ENCODE measurements at regions of chr5 and their contacts with region 1.

Region 1: DNA sequence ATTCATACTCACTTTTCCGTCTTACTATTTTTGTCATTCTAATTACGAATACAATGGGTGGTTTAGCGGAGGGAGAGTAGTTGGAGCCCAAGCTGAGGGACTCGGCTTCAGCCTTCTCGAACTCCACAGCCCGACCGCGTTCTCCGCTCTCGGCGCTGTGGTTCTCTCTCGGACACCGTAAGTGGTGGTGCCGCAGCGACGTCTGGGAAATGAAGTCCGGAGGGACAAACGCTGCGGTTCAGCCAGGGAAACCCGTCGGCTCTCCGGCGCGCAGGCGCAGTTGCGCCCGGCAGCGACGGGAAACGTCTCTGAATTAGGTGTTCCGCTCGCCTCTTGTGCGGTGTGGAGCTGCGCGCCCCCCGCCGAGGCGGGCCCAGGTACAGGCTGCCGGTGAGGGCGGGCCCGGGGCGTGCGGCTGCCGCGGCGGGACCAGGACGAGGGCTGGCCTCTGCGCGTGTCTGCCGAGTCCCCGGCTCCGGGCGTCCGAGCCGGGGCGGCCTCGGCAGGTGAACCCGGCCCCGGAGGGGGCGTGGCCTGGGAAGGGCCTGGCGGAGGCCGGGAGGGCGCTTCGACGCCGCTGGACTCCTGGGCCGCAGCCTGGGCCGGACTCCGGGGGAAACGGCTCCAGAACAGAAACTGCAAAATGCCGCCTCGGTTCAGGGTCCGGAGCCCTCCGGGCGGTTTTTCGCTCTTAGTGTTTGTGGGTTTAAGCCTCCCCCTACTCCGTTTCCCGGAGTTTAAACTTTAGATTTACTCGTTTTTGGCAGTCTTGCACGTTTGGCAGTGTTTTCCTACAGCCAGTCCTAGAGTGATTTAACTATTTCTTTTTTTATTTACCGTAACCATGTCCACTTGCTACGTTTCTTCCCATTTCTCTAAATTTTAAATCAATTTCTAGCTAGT is at the start of gene ZNF879:
- DNase-seq: peak; percentile 96
- ATAC-seq: peak; percentile 97
- H3K4me3 Mint-ChIP-seq: peak within 1 kb of the TSS; percentile 77
- H3K27ac Mint-ChIP-seq: peak within 1 kb of the TSS; percentile 89
- H3K4me1 Mint-ChIP-seq: peaks cover 11% of the 10 kb centered on the region
- H3K27me3 Mint-ChIP-seq: no peaks in the 10 kb centered on the region
- total RNA-seq, gene ZNF879: 2.1 to 3.2 TPM

Region 2: GRCh38 chr5:178232124-178232919 is 791.5 kb before region 1 on chr5 and contains the start of gene PHYKPL:
- CTCF ChIA-PET with region 1: no interaction called
- POLR2A ChIA-PET with region 1: no interaction called
- intact Hi-C with region 1: loop called in 1 of 2 experiments (anchors 2 kb)
- DNase-seq: peak; percentile 81
- ATAC-seq: peak; percentile 70
- H3K4me3 Mint-ChIP-seq: peak within 1 kb of the TSS; percentile 80
- H3K27ac Mint-ChIP-seq: peak within 1 kb of the TSS; percentile 84
- H3K4me1 Mint-ChIP-seq: peaks cover 56% of the 10 kb centered on the region
- H3K27me3 Mint-ChIP-seq: no peaks in the 10 kb centered on the region
- total RNA-seq, gene PHYKPL: 67.2 to 68.4 TPM

Region 3: DNA sequence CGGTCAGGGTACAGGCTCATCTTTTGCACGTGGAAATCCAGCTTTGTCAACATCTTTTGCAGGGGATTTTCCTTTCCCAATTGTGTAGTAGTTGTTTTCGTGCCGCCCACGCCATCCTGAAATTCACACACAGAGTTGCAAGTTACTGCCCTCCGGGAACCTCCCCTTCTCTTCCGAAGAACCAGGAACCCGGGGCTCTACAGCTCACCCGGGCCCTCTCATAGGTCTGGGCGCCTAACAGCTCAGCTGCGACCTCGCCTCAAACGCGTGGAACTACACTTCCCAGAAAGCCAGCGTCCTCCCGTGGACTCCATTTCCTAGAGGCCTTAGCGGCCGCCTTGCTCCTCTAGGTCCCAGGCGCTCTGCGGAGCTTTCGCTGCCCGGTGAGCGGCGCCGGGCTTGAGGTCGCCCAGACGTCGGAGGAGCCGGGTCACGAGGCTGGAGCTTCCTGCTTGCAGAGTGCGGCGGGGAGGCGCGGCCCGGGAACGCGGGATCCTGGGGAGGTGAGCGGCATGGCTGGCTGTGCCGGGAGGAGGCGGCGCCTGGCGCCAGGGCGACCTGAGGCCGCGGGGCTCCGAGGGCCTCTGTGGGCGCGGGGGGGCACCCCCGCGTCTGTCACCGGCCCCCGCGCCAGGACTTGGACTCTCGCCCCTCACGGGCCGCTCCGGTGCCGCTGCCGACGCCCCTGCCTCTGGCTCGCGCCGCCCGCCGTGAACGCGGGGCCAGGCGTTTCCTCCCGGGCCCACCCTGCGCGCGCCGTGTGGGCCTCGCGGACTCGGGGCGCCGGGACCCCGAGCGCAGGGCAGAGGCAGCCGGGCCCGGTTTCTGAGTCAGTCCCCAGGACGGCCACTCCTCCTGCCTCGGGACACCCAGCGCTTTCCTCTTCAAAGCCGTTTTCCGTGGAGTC is 163.9 kb before region 1 on chr5 and contains the start of gene ZNF354B:
- CTCF ChIA-PET with region 1: no interaction called
- POLR2A ChIA-PET with region 1: interaction called, 3 read pairs
- intact Hi-C with region 1: loop called in 1 of 2 experiments (anchors 1 kb)
- DNase-seq: peak; percentile 93
- ATAC-seq: peak; percentile 100
- H3K4me3 Mint-ChIP-seq: peak within 1 kb of the TSS; percentile 79
- H3K27ac Mint-ChIP-seq: peak within 1 kb of the TSS; percentile 89
- H3K4me1 Mint-ChIP-seq: peaks cover 24% of the 10 kb centered on the region
- H3K27me3 Mint-ChIP-seq: no peaks in the 10 kb centered on the region
- total RNA-seq, gene ZNF354B: 10.8 to 11.9 TPM

Region 4: GRCh38 chr5:178895651-178896571 is 127.9 kb before region 1 on chr5 and contains the start of gene ZFP2:
- CTCF ChIA-PET with region 1: no interaction called
- POLR2A ChIA-PET with region 1: no interaction called
- intact Hi-C with region 1: loop called in 1 of 2 experiments (anchors 1 kb)
- DNase-seq: peak; percentile 63
- ATAC-seq: peak; percentile 97
- H3K4me3 Mint-ChIP-seq: peak within 1 kb of the TSS; percentile 69
- H3K27ac Mint-ChIP-seq: peak within 1 kb of the TSS; percentile 51
- H3K4me1 Mint-ChIP-seq: no peaks in the 10 kb centered on the region
- H3K27me3 Mint-ChIP-seq: no peaks in the 10 kb centered on the region
- total RNA-seq, gene ZFP2: 0.37 to 0.85 TPM

Region 5: GRCh38 chr5:179060116-179061008 is 36.6 kb after region 1 on chr5 and contains the start of gene ZNF354C:
- CTCF ChIA-PET with region 1: interaction called, 4 read pairs
- POLR2A ChIA-PET with region 1: no interaction called
- intact Hi-C with region 1: loop called (anchors 1 kb)
- DNase-seq: peak; percentile 93
- ATAC-seq: peak; percentile 99
- H3K4me3 Mint-ChIP-seq: peak within 1 kb of the TSS; percentile 81
- H3K27ac Mint-ChIP-seq: peak within 1 kb of the TSS; percentile 90
- H3K4me1 Mint-ChIP-seq: peaks cover 16% of the 10 kb centered on the region
- H3K27me3 Mint-ChIP-seq: no peaks in the 10 kb centered on the region
- total RNA-seq, gene ZNF354C: 7.1 to 7.2 TPM

Region 6: GRCh38 chr5:179142434-179143198 is 118.8 kb after region 1 on chr5:
- CTCF ChIA-PET with region 1: no interaction called
- POLR2A ChIA-PET with region 1: no interaction called
- intact Hi-C with region 1: loop called in 1 of 2 experiments (anchors 1 kb)
- DNase-seq: peak; percentile 67
- ATAC-seq: peak; percentile 87
- H3K4me3 Mint-ChIP-seq: no peak overlapping the region
- H3K27ac Mint-ChIP-seq: peak overlapping the region; percentile 88
- H3K4me1 Mint-ChIP-seq: peaks cover 37% of the 10 kb centered on the region
- H3K27me3 Mint-ChIP-seq: no peaks in the 10 kb centered on the region

Region 7: DNA sequence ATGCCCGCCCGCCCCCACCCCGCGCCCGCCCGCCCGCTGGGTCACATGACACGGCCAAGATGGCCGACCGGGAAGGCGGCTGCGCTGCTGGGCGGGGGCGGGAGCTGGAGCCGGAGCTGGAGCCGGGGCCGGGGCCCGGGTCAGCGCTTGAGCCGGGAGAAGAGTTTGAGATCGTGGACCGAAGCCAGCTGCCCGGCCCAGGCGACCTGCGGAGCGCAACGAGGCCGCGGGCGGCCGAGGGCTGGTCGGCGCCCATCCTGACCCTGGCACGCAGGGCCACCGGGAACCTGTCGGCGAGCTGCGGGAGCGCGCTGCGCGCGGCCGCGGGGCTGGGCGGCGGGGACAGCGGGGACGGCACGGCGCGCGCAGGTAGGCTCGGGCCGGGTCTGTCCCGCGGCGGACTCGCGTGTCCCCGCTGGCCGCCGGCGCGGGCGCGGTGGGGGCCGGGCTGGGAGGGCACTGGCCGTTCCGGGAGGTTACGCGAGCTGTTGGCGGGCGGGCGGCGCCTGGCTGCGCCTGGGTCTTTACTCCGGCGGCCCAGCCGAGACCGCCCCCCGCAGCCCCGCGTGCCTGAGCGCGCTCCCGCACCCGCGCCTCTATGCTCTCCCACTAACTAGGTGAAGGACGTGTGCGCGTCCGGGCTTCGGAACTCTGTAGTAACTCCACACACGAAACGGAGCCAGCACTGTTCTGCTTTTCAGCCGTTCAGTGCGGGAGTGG is 526.9 kb after region 1 on chr5 and contains the start of gene RUFY1:
- CTCF ChIA-PET with region 1: no interaction called
- POLR2A ChIA-PET with region 1: no interaction called
- intact Hi-C with region 1: loop called in 1 of 2 experiments (anchors 5 kb)
- DNase-seq: peak; percentile 89
- ATAC-seq: peak; percentile 80
- H3K4me3 Mint-ChIP-seq: peak within 1 kb of the TSS; percentile 96
- H3K27ac Mint-ChIP-seq: peak within 1 kb of the TSS; percentile 99
- H3K4me1 Mint-ChIP-seq: peaks cover 37% of the 10 kb centered on the region
- H3K27me3 Mint-ChIP-seq: no peaks in the 10 kb centered on the region
- total RNA-seq, gene RUFY1: 29.6 to 33.8 TPM

Measured in activated CD4-positive, alpha-beta T cell treated with anti-CD3 and anti-CD28 coated beads for 36 hours (primary cell).